Sigmoid colon (tissue), 7 donors: ENCODE measurements at regions of chr9 and their contacts with region 1.

Region 1: GRCh38 chr9:20854444-20854843 is 170.4 kb downstream of the FOCAD start:
- DNase-seq: no peak
- H3K4me3 ChIP-seq: no peak overlapping the region
- H3K27ac ChIP-seq: no peak overlapping the region
- H3K4me1 ChIP-seq: peaks cover 0 to 10% (median 5%) of the 10 kb centered on the region in 4 donors
- H3K27me3 ChIP-seq: no peaks in the 10 kb centered on the region
- CTCF ChIP-seq: no peak
- EP300 ChIP-seq: no peak
- POLR2A ChIP-seq: no peak

Region 2: GRCh38 chr9:20570756-20571155 is 283.7 kb before region 1 on chr9:
- intact Hi-C with region 1: loop called (anchors 10 kb)
- DNase-seq: no peak
- H3K4me3 ChIP-seq: no peak overlapping the region
- H3K27ac ChIP-seq: peak overlapping the region; percentile 6 to 72 (median 54)
- H3K4me1 ChIP-seq: peaks cover 0 to 53% (median 29%) of the 10 kb centered on the region in 4 donors
- H3K27me3 ChIP-seq: no peaks in the 10 kb centered on the region
- CTCF ChIP-seq: no peak
- EP300 ChIP-seq: no peak
- POLR2A ChIP-seq: no peak

Region 3: DNA sequence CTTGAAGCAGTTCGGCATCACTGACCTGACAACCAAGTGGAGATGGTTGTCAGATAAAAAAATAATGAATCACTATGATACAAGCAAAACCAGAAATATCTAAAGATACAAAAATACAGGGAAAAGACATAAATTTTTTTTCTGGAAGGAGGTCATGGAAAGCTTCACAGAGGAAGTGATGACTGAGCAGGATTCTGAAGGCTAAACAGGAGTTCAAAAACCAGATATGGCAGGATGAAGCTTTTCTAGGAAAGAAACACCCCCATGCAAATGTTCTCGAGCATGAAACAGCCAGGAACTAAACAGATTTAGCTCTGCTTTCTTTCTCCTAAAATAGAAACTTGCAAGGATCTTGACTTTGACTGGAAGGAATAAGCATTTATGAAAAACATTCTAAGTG is 688.3 kb after region 1 on chr9:
- intact Hi-C with region 1: no loop called
- DNase-seq: no peak
- H3K4me3 ChIP-seq: no peak overlapping the region
- H3K27ac ChIP-seq: no peak overlapping the region
- H3K4me1 ChIP-seq: no peaks in the 10 kb centered on the region
- H3K27me3 ChIP-seq: no peaks in the 10 kb centered on the region
- CTCF ChIP-seq: no peak
- EP300 ChIP-seq: no peak
- POLR2A ChIP-seq: no peak